CD8-positive, alpha-beta T cell (primary cell): ENCODE measurements at regions of chr5 and their contacts with region 1.

Region 1: DNA sequence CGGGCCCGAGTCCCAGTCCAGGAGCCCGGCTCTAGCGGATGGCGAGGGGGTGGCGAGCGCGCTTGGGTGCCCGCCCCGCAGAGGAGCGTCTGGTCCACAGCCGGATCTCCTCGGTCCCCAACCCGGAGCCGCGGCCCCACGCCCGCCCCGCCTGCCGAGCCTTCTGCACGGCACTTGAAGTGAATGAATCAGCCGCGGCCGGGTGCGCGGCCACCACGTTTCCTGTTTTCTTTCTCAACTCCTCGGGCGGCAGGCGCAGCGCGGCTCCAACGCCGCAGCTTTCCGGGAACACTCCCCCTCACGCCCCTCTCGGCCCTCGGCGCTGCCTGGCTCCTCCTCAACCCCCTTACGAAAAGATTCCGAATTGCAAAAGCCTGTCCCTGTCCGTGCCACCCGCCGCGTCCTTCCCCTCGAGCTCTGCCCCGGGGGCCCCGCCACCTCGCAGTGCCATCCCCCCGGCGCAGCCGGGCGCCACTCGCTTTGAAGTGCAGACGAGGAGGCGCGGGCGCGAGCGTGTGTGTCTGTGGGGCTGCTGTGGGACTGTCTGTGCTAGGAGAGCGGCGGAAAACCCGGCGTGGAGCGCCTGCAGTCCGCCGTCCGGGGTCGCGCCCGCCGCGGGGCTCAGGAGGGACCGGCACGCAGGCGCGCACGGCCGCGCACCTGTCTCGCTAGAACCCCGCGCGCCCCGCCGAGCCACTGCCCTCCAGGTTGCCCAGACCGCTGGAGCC is 456.6 kb downstream of the RAB3C start:
- DNase-seq: peak; percentile 78 to 95 (median 93)
- ATAC-seq: peak; percentile 76
- H3K4me3 ChIP-seq: peak overlapping the region; percentile 59 to 90
- H3K4me3 Mint-ChIP-seq: peak overlapping the region; percentile 96
- H3K27ac ChIP-seq: peak overlapping the region; percentile 79 to 84
- H3K27ac Mint-ChIP-seq: peak overlapping the region; percentile 99
- H3K4me1 ChIP-seq: peaks cover 42% of the 10 kb centered on the region
- H3K4me1 Mint-ChIP-seq: peaks cover 58% of the 10 kb centered on the region
- H3K27me3 ChIP-seq: no peaks in the 10 kb centered on the region
- H3K27me3 Mint-ChIP-seq: no peaks in the 10 kb centered on the region
- CTCF ChIP-seq: no peak

Region 2: GRCh38 chr5:57173185-57174127 is 1866.0 kb before region 1 on chr5 and contains the start of gene GPBP1:
- CTCF ChIA-PET with region 1: no interaction called
- POLR2A ChIA-PET with region 1: no interaction called
- intact Hi-C with region 1: loop called (anchors 5 to 10 kb)
- DNase-seq: peak; percentile 95 to 100 (median 98)
- ATAC-seq: peak; percentile 74
- H3K4me3 ChIP-seq: peak within 1 kb of the TSS; percentile 87 to 100
- H3K4me3 Mint-ChIP-seq: peak within 1 kb of the TSS; percentile 96
- H3K27ac ChIP-seq: peak within 1 kb of the TSS; percentile 91 to 98
- H3K27ac Mint-ChIP-seq: peak within 1 kb of the TSS; percentile 98
- H3K4me1 ChIP-seq: peaks cover 18% of the 10 kb centered on the region
- H3K4me1 Mint-ChIP-seq: peaks cover 38% of the 10 kb centered on the region
- H3K27me3 ChIP-seq: no peaks in the 10 kb centered on the region
- H3K27me3 Mint-ChIP-seq: no peaks in the 10 kb centered on the region
- CTCF ChIP-seq: no peak
- total RNA-seq, gene GPBP1: 164 to 165 TPM

Region 3: DNA sequence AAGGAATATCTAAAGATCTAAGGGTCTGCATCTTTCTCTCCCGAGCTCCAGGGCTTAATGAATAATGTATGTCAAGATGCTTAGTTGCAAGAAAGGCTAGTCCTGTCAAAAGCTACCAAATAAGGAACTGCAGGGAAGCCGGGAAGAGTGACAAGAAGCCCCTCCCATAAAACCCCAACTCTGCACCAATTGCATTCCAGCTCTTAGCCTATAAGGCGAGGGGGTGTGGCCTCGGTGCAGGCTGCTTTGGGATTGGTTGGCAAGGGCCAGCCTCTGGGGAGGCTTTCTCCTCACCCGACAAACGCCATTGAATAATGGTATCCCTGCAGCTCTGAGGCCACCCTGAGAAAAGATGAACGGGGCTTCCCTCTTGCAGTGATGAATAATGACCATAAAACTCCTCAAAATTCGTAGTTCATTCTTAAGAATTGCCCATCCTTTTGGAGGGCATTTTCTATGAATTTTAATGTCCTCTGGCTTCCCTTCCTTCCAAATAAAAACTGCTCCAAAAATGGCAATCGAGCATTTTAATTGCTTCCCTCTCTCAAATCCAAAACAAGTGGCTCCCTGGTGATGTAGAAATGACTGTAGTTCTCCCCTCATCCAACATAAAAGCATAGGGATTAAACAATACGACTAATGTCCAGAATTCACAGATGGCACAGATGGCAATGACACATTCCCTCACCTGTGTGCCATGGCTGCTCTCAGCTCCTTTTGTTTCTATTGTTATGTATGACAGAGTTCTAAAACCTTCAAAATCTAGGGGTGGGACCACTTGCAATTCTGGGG is 39.5 kb before region 1 on chr5:
- CTCF ChIA-PET with region 1: interaction called, 4 read pairs
- POLR2A ChIA-PET with region 1: no interaction called
- intact Hi-C with region 1: loop called in 1 of 2 experiments (anchors 5 kb)
- DNase-seq: no peak
- ATAC-seq: no peak
- H3K4me3 ChIP-seq: no peak overlapping the region
- H3K4me3 Mint-ChIP-seq: no peak overlapping the region
- H3K27ac ChIP-seq: no peak overlapping the region
- H3K27ac Mint-ChIP-seq: no peak overlapping the region
- H3K4me1 ChIP-seq: peaks cover 5% of the 10 kb centered on the region
- H3K4me1 Mint-ChIP-seq: peaks cover 59% of the 10 kb centered on the region
- H3K27me3 ChIP-seq: no peaks in the 10 kb centered on the region
- H3K27me3 Mint-ChIP-seq: no peaks in the 10 kb centered on the region
- CTCF ChIP-seq: no peak

Region 4: DNA sequence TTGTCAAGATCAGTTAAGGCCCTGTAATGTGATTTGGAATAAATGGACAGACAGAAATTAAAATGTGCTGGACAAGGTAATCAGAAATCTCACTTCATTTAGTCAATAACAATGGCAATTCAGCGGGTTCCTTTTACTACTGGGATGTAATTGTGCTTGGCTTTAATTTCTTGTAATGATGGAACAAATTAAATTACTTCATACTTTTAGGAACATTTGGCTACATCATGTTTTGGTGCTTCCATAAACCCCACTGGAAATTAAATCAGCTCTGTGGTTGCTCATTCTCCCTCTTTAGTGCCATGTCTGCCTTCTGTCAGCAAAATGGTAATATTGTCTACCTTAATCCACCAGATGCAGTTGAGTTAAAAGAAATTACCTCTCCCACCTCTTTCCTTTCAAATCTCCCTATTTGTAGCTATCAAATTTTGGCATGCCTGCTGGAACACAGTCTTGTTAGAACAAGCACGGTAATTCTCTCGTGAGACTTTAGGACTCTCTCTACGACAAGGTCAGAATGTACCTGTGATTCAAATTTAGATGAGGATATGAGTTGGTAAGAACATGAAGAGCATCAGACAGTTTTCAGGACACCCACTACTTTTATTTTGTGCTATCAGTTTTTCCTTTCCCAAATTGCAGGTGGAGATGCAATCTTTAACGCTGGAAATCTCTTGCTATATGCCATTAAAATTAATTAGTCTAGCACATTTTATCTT is 19.7 kb after region 1 on chr5:
- CTCF ChIA-PET with region 1: interaction called, 3 read pairs
- POLR2A ChIA-PET with region 1: interaction called, 3 read pairs
- intact Hi-C with region 1: loop called in 1 of 2 experiments (anchors 2 kb)
- DNase-seq: no peak
- ATAC-seq: no peak
- H3K4me3 ChIP-seq: no peak overlapping the region
- H3K4me3 Mint-ChIP-seq: no peak overlapping the region
- H3K27ac ChIP-seq: no peak overlapping the region
- H3K27ac Mint-ChIP-seq: no peak overlapping the region
- H3K4me1 ChIP-seq: no peaks in the 10 kb centered on the region
- H3K4me1 Mint-ChIP-seq: no peaks in the 10 kb centered on the region
- H3K27me3 ChIP-seq: no peaks in the 10 kb centered on the region
- H3K27me3 Mint-ChIP-seq: no peaks in the 10 kb centered on the region
- CTCF ChIP-seq: no peak

Region 5: GRCh38 chr5:59086024-59086423 is 46.6 kb after region 1 on chr5:
- CTCF ChIA-PET with region 1: interaction called, 10 read pairs
- POLR2A ChIA-PET with region 1: interaction called, 3 read pairs
- intact Hi-C with region 1: loop called in 1 of 2 experiments (anchors 5 kb)
- DNase-seq: peak in 2 of 9 experiments; percentile 22 to 43
- ATAC-seq: peak; percentile 49
- H3K4me3 ChIP-seq: no peak overlapping the region
- H3K4me3 Mint-ChIP-seq: no peak overlapping the region
- H3K27ac ChIP-seq: no peak overlapping the region
- H3K27ac Mint-ChIP-seq: no peak overlapping the region
- H3K4me1 ChIP-seq: no peaks in the 10 kb centered on the region
- H3K4me1 Mint-ChIP-seq: no peaks in the 10 kb centered on the region
- H3K27me3 ChIP-seq: no peaks in the 10 kb centered on the region
- H3K27me3 Mint-ChIP-seq: peaks cover 2% of the 10 kb centered on the region
- CTCF ChIP-seq: no peak

Region 6: DNA sequence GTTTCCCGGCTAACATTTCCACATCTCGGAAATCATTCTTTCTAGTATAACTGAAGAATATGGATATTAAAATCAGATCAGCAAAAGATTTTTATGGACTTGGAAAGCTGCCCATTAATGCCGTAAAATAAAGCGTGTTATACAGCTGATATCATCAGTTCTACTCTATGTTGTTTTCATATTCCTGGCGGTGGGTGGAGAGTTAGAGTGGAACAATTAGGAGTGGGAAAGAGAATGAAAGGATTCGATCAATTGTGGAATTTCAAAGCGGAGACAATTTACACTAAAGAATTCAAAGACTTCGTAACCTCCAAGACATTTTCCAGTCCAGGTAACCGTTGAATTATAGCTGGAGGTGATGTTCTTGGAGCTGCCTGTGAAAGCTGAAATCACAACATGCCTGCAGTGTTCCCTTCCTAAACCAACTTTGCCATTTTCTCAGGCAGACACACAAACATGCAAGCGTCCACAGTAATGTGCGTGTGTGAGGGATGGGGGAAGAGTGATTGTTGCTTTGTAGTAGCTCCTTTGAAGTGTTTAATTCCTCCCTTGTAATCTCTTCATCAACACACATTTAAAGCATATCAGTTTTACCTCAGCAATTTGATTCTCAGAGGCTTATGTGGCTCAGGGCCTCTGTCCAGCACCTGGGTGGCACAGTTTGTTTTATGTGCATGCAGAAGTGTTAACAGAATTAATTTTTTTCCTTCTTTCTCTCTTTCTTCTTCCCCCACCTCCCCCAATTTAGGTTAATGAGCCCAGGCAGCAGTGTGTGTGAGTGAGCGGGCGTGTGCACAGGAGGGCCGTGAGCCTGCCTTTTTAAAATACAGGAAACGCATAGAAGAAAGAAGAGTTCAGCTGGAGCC is 87.5 kb after region 1 on chr5:
- CTCF ChIA-PET with region 1: interaction called, 48 read pairs
- POLR2A ChIA-PET with region 1: interaction called, 77 read pairs
- intact Hi-C with region 1: loop called (anchors 1 kb)
- DNase-seq: peak in 3 of 9 experiments; percentile 7 to 73 (median 59)
- ATAC-seq: no peak
- H3K4me3 ChIP-seq: peak overlapping the region; percentile 37 to 49
- H3K4me3 Mint-ChIP-seq: no peak overlapping the region
- H3K27ac ChIP-seq: peak overlapping the region; percentile 19 to 82
- H3K27ac Mint-ChIP-seq: no peak overlapping the region
- H3K4me1 ChIP-seq: peaks cover 67% of the 10 kb centered on the region
- H3K4me1 Mint-ChIP-seq: peaks cover 14% of the 10 kb centered on the region
- H3K27me3 ChIP-seq: no peaks in the 10 kb centered on the region
- H3K27me3 Mint-ChIP-seq: no peaks in the 10 kb centered on the region
- CTCF ChIP-seq: no peak

Region 7: GRCh38 chr5:59174248-59174844 is 134.9 kb after region 1 on chr5:
- CTCF ChIA-PET with region 1: interaction called, 133 read pairs
- POLR2A ChIA-PET with region 1: interaction called, 8 read pairs
- intact Hi-C with region 1: loop called (anchors 1 kb)
- DNase-seq: peak in 6 of 9 experiments; percentile 8 to 81 (median 30)
- ATAC-seq: peak; percentile 80
- H3K4me3 ChIP-seq: no peak overlapping the region
- H3K4me3 Mint-ChIP-seq: no peak overlapping the region
- H3K27ac ChIP-seq: no peak overlapping the region
- H3K27ac Mint-ChIP-seq: no peak overlapping the region
- H3K4me1 ChIP-seq: no peaks in the 10 kb centered on the region
- H3K4me1 Mint-ChIP-seq: no peaks in the 10 kb centered on the region
- H3K27me3 ChIP-seq: no peaks in the 10 kb centered on the region
- H3K27me3 Mint-ChIP-seq: no peaks in the 10 kb centered on the region
- CTCF ChIP-seq: peak; percentile 87